ENCODE measurements at regions of chr15 and their contacts with region 1.

Region 1: GRCh38 chr15:27623560-27624305 is 475.4 kb downstream of the OCA2 start:
- DNase-seq: no peak
- ATAC-seq: no peak
- H3K4me3 ChIP-seq: no peak overlapping the region
- H3K27ac ChIP-seq: no peak overlapping the region
- H3K4me1 ChIP-seq: no peaks in the 10 kb centered on the region
- H3K27me3 ChIP-seq: no peaks in the 10 kb centered on the region
- CTCF ChIP-seq: no peak
- POLR2A ChIP-seq: no peak

Region 2: DNA sequence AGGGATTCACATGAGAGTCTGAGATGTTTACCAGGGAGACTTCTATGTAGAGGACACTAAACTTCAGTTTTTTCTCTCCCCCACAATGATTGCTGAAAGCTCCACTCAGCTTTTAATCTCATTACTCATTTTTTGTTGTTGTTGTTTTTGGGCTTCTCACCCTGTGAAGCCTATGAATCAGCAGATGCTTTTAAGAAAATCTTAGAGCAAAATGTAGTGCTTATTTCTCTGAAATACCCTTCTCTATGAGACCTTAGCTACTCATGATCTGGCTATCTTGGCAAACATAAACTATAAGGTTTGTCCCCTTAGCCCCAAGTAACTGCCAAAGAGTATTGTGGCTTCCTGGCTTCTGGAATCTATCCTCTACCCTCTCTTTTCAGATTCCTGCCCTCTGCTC is 61.9 kb before region 1 on chr15:
- intact Hi-C with region 1: loop called in 2 of 10 experiments (anchors 10 kb)
- DNase-seq: no peak
- ATAC-seq: no peak
- H3K4me3 ChIP-seq: no peak overlapping the region
- H3K27ac ChIP-seq: no peak overlapping the region
- H3K4me1 ChIP-seq: no peaks in the 10 kb centered on the region
- H3K27me3 ChIP-seq: no peaks in the 10 kb centered on the region
- CTCF ChIP-seq: no peak
- POLR2A ChIP-seq: no peak

Region 3: GRCh38 chr15:27587810-27588209 is 35.9 kb before region 1 on chr15:
- intact Hi-C with region 1: no loop called
- DNase-seq: no peak
- ATAC-seq: no peak
- H3K4me3 ChIP-seq: no peak overlapping the region
- H3K27ac ChIP-seq: no peak overlapping the region
- H3K4me1 ChIP-seq: no peaks in the 10 kb centered on the region
- H3K27me3 ChIP-seq: peaks cover 0 to 7% (median 0%) of the 10 kb centered on the region in 9 donors
- CTCF ChIP-seq: no peak
- POLR2A ChIP-seq: no peak

Region 4: GRCh38 chr15:27679731-27680471 is 56.2 kb after region 1 on chr15:
- intact Hi-C with region 1: loop called in 1 of 10 experiments (anchors 10 kb)
- DNase-seq: no peak
- ATAC-seq: no peak
- H3K4me3 ChIP-seq: no peak overlapping the region
- H3K27ac ChIP-seq: no peak overlapping the region
- H3K4me1 ChIP-seq: no peaks in the 10 kb centered on the region
- H3K27me3 ChIP-seq: no peaks in the 10 kb centered on the region
- CTCF ChIP-seq: no peak
- POLR2A ChIP-seq: no peak